ENCODE measurements at regions of chr4 and their contacts with region 1.

Region 1: GRCh38 chr4:99808260-99808857 is 8.3 kb upstream of the DAPP1 start:
- DNase-seq: peak; percentile 82
- H3K4me3 Mint-ChIP-seq: no peak overlapping the region
- H3K27ac Mint-ChIP-seq: no peak overlapping the region
- H3K4me1 Mint-ChIP-seq: peaks cover 14% of the 10 kb centered on the region
- H3K27me3 Mint-ChIP-seq: peaks cover 34% of the 10 kb centered on the region

Region 2: GRCh38 chr4:99462875-99463464 is 345.4 kb before region 1 on chr4:
- CTCF ChIA-PET with region 1: interaction called, 11 read pairs
- DNase-seq: peak; percentile 63
- H3K4me3 Mint-ChIP-seq: no peak overlapping the region
- H3K27ac Mint-ChIP-seq: no peak overlapping the region
- H3K4me1 Mint-ChIP-seq: no peaks in the 10 kb centered on the region
- H3K27me3 Mint-ChIP-seq: no peaks in the 10 kb centered on the region

Region 3: DNA sequence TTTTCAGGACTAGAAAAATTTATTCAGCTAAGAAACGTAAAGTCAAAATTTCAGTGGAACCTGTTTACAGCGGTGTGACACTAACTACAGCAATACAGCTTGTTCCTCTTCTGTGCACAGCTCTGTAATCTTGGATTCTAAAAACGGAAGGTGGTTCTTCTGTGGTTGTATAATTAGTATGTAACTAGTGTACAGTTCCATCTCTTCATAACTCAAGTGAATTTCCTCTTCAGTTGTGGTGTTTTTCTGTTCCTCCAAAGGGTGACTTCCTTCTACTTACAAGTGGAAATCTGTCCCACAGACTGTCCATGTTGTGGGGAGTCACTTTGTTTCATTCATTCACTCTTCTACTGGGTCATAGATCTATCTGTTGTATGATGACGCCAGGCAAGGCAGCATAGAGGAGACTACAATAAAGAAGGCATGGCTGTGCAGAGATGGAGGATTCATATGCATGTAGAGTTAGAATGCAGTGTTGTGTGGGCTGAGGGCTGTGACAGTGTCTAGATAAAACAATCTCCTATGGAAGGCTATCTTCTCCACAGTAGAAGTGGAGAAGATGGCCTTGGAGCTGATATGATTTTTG is 13.7 kb after region 1 on chr4:
- CTCF ChIA-PET with region 1: interaction called, 10 read pairs
- DNase-seq: no peak
- H3K4me3 Mint-ChIP-seq: no peak overlapping the region
- H3K27ac Mint-ChIP-seq: peak overlapping the region; percentile 72
- H3K4me1 Mint-ChIP-seq: peaks cover 75% of the 10 kb centered on the region
- H3K27me3 Mint-ChIP-seq: no peaks in the 10 kb centered on the region

Region 4: DNA sequence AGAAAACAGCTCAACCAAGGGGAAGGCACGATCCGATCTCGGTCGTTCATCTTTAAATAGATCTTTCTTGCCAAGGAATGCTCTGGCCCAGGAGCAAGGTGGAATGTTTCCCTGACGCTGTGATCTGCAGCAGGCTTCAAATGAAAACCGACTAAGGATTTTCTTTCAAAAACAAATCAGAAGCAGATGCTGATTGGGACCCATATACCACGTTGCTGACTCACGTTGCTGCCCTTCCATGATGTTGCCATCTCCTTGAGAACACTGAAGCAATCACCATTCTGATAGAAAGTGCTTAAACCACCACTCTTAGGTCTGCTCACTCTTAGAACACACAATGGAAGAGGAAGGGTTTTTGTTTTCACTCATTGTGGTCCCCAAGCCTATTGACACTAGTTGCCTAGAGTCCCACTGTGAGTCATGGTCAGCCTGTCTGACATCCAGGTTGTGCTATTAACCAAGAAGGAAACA is 59.8 kb after region 1 on chr4:
- CTCF ChIA-PET with region 1: interaction called, 11 read pairs
- DNase-seq: no peak
- H3K4me3 Mint-ChIP-seq: no peak overlapping the region
- H3K27ac Mint-ChIP-seq: no peak overlapping the region
- H3K4me1 Mint-ChIP-seq: no peaks in the 10 kb centered on the region
- H3K27me3 Mint-ChIP-seq: no peaks in the 10 kb centered on the region

Region 5: DNA sequence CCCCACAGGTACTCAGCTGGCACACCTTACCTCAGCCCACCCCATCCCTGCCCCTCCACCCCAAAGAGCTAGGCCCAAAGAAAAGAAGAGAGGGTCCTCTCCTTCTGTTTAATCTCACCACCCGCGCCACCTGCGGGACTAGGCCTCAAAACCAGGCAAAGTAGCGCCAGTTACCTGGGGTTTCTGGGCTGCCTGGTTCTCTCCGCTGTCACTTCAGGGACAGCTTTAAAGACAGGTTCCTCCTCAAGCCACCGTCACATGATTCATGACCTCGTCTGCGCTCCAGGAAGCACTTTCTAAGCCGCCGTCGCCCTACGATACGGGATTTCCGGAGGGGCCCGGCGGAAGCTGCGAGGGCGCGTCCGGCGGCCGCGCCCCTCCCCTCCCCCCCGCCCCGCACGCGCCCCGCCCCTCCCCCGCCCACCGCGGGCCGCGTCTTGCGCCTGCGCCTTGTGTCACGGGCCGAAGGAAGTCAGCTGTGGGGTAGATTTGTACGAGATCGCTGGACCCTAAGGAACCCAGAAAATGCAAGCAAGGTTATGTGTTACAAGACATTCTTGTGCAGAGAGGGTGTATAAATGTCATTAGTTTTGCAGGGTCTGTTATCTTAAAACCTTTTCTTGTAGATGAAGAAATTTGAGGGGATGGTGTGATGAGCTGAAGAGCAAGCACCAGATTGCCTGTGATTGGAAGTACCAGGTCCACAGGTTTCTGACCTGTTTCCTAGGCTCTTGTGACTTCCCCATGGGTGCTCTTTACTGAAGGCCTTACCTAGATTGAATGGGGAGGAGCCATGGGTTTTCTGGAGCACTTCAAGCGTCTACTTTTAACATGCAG is 86.0 kb after region 1 on chr4 and contains the start of gene LAMTOR3:
- CTCF ChIA-PET with region 1: interaction called, 17 read pairs
- DNase-seq: peak; percentile 93
- H3K4me3 Mint-ChIP-seq: peak within 1 kb of the TSS; percentile 93
- H3K27ac Mint-ChIP-seq: peak within 1 kb of the TSS; percentile 95
- H3K4me1 Mint-ChIP-seq: peaks cover 44% of the 10 kb centered on the region
- H3K27me3 Mint-ChIP-seq: no peaks in the 10 kb centered on the region

Measured in activated naive CD4-positive, alpha-beta T cell treated with anti-CD3 and anti-CD28 coated beads, Interleukin-2, amount 10 ng/mL, durations not matched to agents 7 days and 5 days (primary cell).